GM10248 (cell line): ENCODE measurements at regions of chr1 and their contacts with region 1.

Region 1: GRCh38 chr1:39901698-39902459 is at the start of gene MYCL:
- DNase-seq: peak; percentile 87
- CTCF ChIP-seq: peak; percentile 69

Region 2: DNA sequence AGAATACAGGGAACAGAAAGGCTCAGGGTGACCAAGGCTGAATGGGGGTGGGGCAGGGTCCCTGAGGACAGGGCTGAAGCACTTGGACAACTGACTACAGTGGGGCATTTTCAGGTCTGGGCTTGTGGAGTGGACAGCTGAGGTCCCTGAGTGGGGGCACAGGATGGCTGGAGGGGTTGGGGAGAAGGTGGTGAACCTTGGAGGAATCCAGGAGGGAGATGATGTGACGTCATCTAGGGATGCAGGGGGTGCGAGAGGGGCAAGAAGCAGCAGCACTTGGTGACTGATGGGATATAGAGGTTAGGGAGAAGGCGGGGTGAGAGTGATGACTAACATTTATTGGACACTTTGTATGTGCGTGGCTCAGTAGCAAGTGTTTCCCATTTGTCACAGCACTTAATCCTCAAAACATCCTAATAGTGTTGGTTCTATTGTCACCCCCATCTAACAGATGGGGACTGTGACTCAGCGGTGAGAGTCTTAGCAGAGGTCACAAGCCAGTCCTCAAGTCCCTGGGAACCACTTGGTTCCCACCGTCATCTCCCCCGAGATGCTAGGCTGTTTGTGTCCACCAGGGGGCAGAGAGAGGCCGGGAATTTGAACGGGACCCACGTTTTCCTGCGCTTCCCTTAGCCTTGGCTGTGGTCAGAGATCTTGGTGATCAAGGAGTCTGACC is 85.3 kb before region 1 on chr1:
- CTCF ChIA-PET with region 1: interaction called, 100 read pairs
- POLR2A ChIA-PET with region 1: no interaction called
- DNase-seq: peak; percentile 79
- CTCF ChIP-seq: peak; percentile 67

Region 3: GRCh38 chr1:39822091-39822490 is 79.8 kb before region 1 on chr1:
- CTCF ChIA-PET with region 1: interaction called, 100 read pairs
- POLR2A ChIA-PET with region 1: no interaction called
- DNase-seq: no peak
- CTCF ChIP-seq: no peak

Region 4: GRCh38 chr1:39845275-39846116 is 56.4 kb before region 1 on chr1:
- CTCF ChIA-PET with region 1: interaction called, 13 read pairs
- POLR2A ChIA-PET with region 1: no interaction called
- DNase-seq: peak; percentile 45
- CTCF ChIP-seq: no peak

Region 5: GRCh38 chr1:39876144-39876543 is 25.7 kb before region 1 on chr1:
- CTCF ChIA-PET with region 1: interaction called, 38 read pairs
- POLR2A ChIA-PET with region 1: no interaction called
- DNase-seq: no peak
- CTCF ChIP-seq: no peak

Region 6: GRCh38 chr1:40011198-40011597 is 109.3 kb after region 1 on chr1:
- CTCF ChIA-PET with region 1: no interaction called
- POLR2A ChIA-PET with region 1: no interaction called
- DNase-seq: no peak
- CTCF ChIP-seq: no peak